T-cell (primary cell): ENCODE measurements at regions of chr16 and their contacts with region 1.

Region 1: GRCh38 chr16:53476867-53477266 is 26.1 kb downstream of the AKTIP start:
- DNase-seq: no peak
- ATAC-seq: no peak
- H3K4me3 ChIP-seq: no peak overlapping the region
- H3K4me3 Mint-ChIP-seq: peak overlapping the region in 2 of 3 donors; percentile 7 to 17
- H3K27ac ChIP-seq: no peak overlapping the region
- H3K27ac Mint-ChIP-seq: peak overlapping the region; percentile 64 to 79
- H3K4me1 ChIP-seq: peaks cover 5 to 17% of the 10 kb centered on the region in 2 experiments
- H3K4me1 Mint-ChIP-seq: peaks cover 64 to 78% (median 68%) of the 10 kb centered on the region in 3 donors
- H3K27me3 ChIP-seq: no peaks in the 10 kb centered on the region
- H3K27me3 Mint-ChIP-seq: no peaks in the 10 kb centered on the region

Region 2: GRCh38 chr16:53404959-53405358 is 71.9 kb before region 1 on chr16:
- CTCF ChIA-PET with region 1: no interaction called
- POLR2A ChIA-PET with region 1: no interaction called
- DNase-seq: no peak
- ATAC-seq: no peak
- H3K4me3 ChIP-seq: no peak overlapping the region
- H3K4me3 Mint-ChIP-seq: no peak overlapping the region
- H3K27ac ChIP-seq: no peak overlapping the region
- H3K27ac Mint-ChIP-seq: no peak overlapping the region
- H3K4me1 ChIP-seq: peaks cover 0 to 2% of the 10 kb centered on the region in 2 experiments
- H3K4me1 Mint-ChIP-seq: no peaks in the 10 kb centered on the region
- H3K27me3 ChIP-seq: no peaks in the 10 kb centered on the region
- H3K27me3 Mint-ChIP-seq: no peaks in the 10 kb centered on the region

Region 3: DNA sequence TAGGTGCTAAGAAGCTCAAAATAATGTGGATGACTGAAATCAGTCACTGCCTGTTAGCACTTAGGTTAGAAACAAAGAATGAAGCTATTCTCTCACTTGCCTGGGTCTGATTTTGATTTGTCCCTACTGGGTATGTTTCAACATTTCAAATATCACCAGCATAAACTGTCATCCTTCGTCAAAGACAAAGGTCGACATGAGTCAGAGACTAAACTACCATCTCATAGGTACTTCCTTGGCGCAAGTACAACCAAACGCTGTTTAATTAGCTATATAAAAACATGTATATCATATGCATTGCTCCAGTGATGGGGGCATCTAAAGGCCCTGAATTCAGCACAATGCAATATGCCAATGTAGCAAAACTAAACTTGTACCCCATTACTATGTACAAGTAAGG is 22.1 kb after region 1 on chr16:
- CTCF ChIA-PET with region 1: no interaction called
- POLR2A ChIA-PET with region 1: interaction called in 1 of 2 experiments, 21 read pairs
- DNase-seq: no peak
- ATAC-seq: no peak
- H3K4me3 ChIP-seq: no peak overlapping the region
- H3K4me3 Mint-ChIP-seq: peak overlapping the region in 2 of 3 donors; percentile 49 to 52
- H3K27ac ChIP-seq: no peak overlapping the region
- H3K27ac Mint-ChIP-seq: peak overlapping the region; percentile 66 to 73
- H3K4me1 ChIP-seq: peaks cover 22 to 28% of the 10 kb centered on the region in 2 experiments
- H3K4me1 Mint-ChIP-seq: peaks cover 67 to 71% (median 68%) of the 10 kb centered on the region in 3 donors
- H3K27me3 ChIP-seq: no peaks in the 10 kb centered on the region
- H3K27me3 Mint-ChIP-seq: no peaks in the 10 kb centered on the region